ENCODE measurements at regions of chr1 and their contacts with region 1.

Region 1: DNA sequence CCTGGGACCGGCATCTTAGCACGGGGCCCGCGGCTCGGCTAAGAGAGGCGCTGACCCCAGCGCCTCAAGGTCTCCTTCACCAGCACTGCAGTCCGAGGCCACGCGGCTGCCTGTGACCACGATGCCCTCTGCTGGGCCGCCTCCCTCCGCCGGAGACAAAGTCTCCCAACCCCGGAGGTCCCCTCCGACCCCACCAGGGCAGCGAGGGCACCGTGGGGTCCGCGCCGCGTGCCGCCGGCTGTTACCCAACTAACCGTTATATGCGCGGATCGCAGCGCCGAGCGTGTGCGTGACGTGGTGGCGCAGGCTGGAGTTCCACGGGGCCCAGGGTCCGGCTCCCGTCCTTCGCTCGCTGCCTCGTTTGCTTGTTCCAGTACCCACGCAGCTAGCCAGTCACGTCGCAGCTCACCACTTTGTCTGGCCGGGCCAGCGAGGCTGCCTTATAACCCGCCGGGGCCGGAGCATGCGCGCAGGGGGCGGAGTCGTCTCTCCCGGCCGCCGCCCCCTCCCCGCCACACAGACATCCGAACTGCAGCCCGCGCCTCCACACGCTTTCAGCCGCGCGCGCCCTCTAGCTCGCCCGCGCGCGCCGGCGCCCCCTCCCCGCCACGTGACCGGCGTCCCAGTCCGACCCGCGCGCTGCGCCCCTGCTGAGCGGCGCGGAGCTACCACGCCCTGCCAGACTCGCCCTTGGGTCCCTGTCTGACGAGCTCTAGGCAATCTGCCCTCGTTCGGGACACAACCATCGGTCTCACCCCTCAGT is at the start of gene SLC16A1:
- DNase-seq: peak; percentile 96
- ATAC-seq: peak; percentile 75
- H3K4me3 Mint-ChIP-seq: peak within 1 kb of the TSS; percentile 97
- H3K27ac Mint-ChIP-seq: peak within 1 kb of the TSS; percentile 100
- H3K4me1 Mint-ChIP-seq: peaks cover 56% of the 10 kb centered on the region
- H3K27me3 Mint-ChIP-seq: no peaks in the 10 kb centered on the region
- total RNA-seq, gene SLC16A1: 70.0 to 70.4 TPM

Region 2: DNA sequence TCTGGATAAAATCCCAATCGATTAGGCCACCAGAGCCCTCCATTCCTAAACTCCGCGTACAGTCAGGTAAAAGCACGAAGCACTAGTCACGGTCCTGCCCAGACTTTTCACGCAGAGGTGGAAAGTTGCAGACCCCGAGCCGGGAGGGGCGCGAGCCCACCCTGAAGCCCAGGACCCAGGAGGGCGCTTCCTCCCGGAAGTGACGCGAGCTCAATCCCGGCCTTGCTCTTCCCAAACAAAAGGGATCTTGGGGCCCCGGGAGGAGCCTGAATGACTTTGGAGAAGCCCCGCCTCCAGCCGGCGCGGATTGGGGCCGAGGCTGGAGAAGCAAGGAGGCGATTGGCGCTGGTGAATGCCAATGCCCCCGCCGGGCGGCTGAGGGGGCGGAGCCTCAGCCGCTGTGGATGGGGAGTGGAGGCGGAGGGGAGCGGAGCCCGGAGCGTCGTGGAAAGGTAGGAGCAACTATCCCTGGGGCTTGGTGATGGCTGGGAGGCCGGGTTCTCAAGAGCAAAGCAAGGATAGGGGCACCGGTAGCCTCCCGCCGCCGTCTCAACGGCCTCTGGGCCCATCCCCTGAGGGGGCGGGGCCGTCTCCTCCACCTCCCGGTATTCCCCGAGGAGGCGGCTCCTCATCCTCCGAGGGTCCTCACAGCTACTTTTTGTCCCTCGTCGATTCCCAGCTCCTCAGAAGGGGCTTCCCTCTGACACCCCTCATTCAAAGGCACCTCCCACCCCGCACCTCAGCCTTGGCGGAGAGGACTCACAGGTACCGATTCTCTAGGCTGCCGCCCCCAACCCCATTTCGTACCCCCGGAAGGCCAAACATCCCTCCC is 559.9 kb before region 1 on chr1 and contains the start of gene CTTNBP2NL:
- CTCF ChIA-PET with region 1: no interaction called
- POLR2A ChIA-PET with region 1: no interaction called
- intact Hi-C with region 1: loop called in 1 of 2 experiments (anchors 2 kb)
- DNase-seq: peak; percentile 90
- ATAC-seq: peak; percentile 93
- H3K4me3 Mint-ChIP-seq: peak within 1 kb of the TSS; percentile 86
- H3K27ac Mint-ChIP-seq: peak within 1 kb of the TSS; percentile 69
- H3K4me1 Mint-ChIP-seq: peaks cover 28% of the 10 kb centered on the region
- H3K27me3 Mint-ChIP-seq: peaks cover 14% of the 10 kb centered on the region
- total RNA-seq, gene CTTNBP2NL: 2.9 to 3.3 TPM

Region 3: GRCh38 chr1:112849425-112850033 is 106.4 kb before region 1 on chr1:
- CTCF ChIA-PET with region 1: no interaction called
- POLR2A ChIA-PET with region 1: no interaction called
- intact Hi-C with region 1: no loop called
- DNase-seq: peak; percentile 20
- ATAC-seq: no peak
- H3K4me3 Mint-ChIP-seq: no peak overlapping the region
- H3K27ac Mint-ChIP-seq: no peak overlapping the region
- H3K4me1 Mint-ChIP-seq: no peaks in the 10 kb centered on the region
- H3K27me3 Mint-ChIP-seq: peaks cover 43% of the 10 kb centered on the region

Region 4: GRCh38 chr1:112866151-112866550 is 89.8 kb before region 1 on chr1:
- CTCF ChIA-PET with region 1: no interaction called
- POLR2A ChIA-PET with region 1: no interaction called
- intact Hi-C with region 1: no loop called
- DNase-seq: no peak
- ATAC-seq: no peak
- H3K4me3 Mint-ChIP-seq: no peak overlapping the region
- H3K27ac Mint-ChIP-seq: no peak overlapping the region
- H3K4me1 Mint-ChIP-seq: no peaks in the 10 kb centered on the region
- H3K27me3 Mint-ChIP-seq: no peaks in the 10 kb centered on the region

Region 5: DNA sequence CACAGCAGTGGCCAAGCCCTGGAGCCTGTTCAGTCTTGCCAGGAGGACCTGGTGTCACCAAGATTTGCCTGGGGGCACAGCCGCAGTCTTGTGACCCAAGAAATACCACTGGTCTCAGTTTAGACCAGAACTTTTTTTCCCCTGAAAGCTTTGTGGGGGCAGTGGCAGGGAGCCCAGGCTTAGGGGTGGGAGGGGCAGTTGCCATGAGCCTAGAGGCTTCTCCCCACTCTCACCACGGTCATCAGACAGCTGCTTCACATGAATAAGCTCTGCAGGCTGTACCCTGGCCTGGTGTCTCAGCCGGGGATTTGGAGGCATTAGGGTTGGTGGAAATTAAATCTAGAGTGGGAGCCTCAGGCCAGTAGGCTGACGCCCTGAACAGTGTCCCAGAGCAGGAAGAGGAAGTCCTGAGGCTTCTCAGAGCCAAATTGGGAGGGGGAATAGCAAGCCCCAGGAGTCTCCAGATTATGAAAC is 73.7 kb before region 1 on chr1:
- CTCF ChIA-PET with region 1: interaction called, 5 read pairs
- POLR2A ChIA-PET with region 1: no interaction called
- intact Hi-C with region 1: loop called (anchors 1 kb)
- DNase-seq: no peak
- ATAC-seq: no peak
- H3K4me3 Mint-ChIP-seq: no peak overlapping the region
- H3K27ac Mint-ChIP-seq: no peak overlapping the region
- H3K4me1 Mint-ChIP-seq: no peaks in the 10 kb centered on the region
- H3K27me3 Mint-ChIP-seq: peaks cover 3% of the 10 kb centered on the region

Region 6: GRCh38 chr1:112904071-112904830 is 51.7 kb before region 1 on chr1:
- CTCF ChIA-PET with region 1: no interaction called
- POLR2A ChIA-PET with region 1: no interaction called
- intact Hi-C with region 1: loop called (anchors 1 to 2 kb)
- DNase-seq: peak; percentile 80
- ATAC-seq: peak; percentile 96
- H3K4me3 Mint-ChIP-seq: no peak overlapping the region
- H3K27ac Mint-ChIP-seq: peak overlapping the region; percentile 83
- H3K4me1 Mint-ChIP-seq: peaks cover 41% of the 10 kb centered on the region
- H3K27me3 Mint-ChIP-seq: no peaks in the 10 kb centered on the region

Region 7: GRCh38 chr1:113759333-113760101 is 803.6 kb after region 1 on chr1 and contains the start of gene PHTF1:
- CTCF ChIA-PET with region 1: no interaction called
- POLR2A ChIA-PET with region 1: no interaction called
- intact Hi-C with region 1: loop called in 1 of 2 experiments (anchors 2 kb)
- DNase-seq: peak; percentile 77
- ATAC-seq: peak; percentile 81
- H3K4me3 Mint-ChIP-seq: peak within 1 kb of the TSS; percentile 81
- H3K27ac Mint-ChIP-seq: peak within 1 kb of the TSS; percentile 94
- H3K4me1 Mint-ChIP-seq: peaks cover 13% of the 10 kb centered on the region
- H3K27me3 Mint-ChIP-seq: no peaks in the 10 kb centered on the region
- total RNA-seq, gene PHTF1: 11.3 to 12.2 TPM

Region 8: DNA sequence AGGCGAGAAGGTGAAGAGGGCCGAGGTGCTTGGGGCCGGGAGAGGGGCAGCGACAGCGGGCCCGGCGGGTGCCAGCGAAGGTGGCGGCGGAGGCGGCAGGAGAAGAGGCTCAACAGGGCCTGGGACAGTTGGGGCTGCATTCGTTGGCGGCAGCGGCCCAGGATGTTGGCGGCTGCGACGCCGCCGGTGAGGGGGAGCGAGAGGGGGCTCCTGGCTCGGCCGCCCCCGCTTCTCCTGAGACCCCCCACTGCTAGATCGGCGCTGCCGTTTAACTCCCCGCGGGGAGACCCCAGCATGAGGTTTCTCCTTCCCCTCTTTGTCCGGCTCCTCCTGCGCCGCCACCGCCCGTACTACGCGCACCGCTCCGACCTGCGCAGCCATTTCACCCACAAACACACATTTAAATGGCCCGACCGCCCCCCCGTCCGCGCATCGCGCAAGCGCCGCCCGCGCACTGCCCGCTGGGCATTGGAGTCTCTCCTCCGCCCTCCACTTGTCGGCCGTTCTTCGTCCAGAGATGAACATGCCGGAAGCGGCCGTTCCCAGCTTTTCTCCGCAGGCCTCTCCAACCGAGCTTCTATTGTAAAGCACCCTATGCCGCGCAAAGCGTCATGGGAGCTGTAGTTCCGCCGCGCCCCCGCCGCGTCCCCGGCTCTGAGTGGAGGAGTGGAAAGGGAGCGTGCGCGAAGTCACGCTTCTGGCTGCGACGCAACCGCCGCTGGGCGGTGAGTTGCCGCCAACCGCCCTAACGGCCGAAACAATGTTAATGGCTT is 856.1 kb after region 1 on chr1 and contains the start of gene RSBN1:
- CTCF ChIA-PET with region 1: no interaction called
- POLR2A ChIA-PET with region 1: no interaction called
- intact Hi-C with region 1: loop called (anchors 5 to 10 kb)
- DNase-seq: peak; percentile 99
- ATAC-seq: peak; percentile 97
- H3K4me3 Mint-ChIP-seq: peak within 1 kb of the TSS; percentile 97
- H3K27ac Mint-ChIP-seq: peak within 1 kb of the TSS; percentile 97
- H3K4me1 Mint-ChIP-seq: peaks cover 33% of the 10 kb centered on the region
- H3K27me3 Mint-ChIP-seq: no peaks in the 10 kb centered on the region
- total RNA-seq, gene RSBN1: 22.1 to 24.3 TPM

Region 9: GRCh38 chr1:113871597-113872113 is 915.7 kb after region 1 on chr1 and contains the start of gene PTPN22:
- CTCF ChIA-PET with region 1: no interaction called
- POLR2A ChIA-PET with region 1: no interaction called
- intact Hi-C with region 1: loop called in 1 of 2 experiments (anchors 2 kb)
- DNase-seq: peak; percentile 89
- ATAC-seq: peak; percentile 84
- H3K4me3 Mint-ChIP-seq: peak within 1 kb of the TSS; percentile 84
- H3K27ac Mint-ChIP-seq: peak within 1 kb of the TSS; percentile 99
- H3K4me1 Mint-ChIP-seq: peaks cover 72% of the 10 kb centered on the region
- H3K27me3 Mint-ChIP-seq: no peaks in the 10 kb centered on the region
- total RNA-seq, gene PTPN22: 42.4 to 52.6 TPM

Measured in activated CD4-positive, alpha-beta T cell treated with anti-CD3 and anti-CD28 coated beads for 36 hours (primary cell).